ENCODE measurements at regions of chr15 and their contacts with region 1.

Region 1: DNA sequence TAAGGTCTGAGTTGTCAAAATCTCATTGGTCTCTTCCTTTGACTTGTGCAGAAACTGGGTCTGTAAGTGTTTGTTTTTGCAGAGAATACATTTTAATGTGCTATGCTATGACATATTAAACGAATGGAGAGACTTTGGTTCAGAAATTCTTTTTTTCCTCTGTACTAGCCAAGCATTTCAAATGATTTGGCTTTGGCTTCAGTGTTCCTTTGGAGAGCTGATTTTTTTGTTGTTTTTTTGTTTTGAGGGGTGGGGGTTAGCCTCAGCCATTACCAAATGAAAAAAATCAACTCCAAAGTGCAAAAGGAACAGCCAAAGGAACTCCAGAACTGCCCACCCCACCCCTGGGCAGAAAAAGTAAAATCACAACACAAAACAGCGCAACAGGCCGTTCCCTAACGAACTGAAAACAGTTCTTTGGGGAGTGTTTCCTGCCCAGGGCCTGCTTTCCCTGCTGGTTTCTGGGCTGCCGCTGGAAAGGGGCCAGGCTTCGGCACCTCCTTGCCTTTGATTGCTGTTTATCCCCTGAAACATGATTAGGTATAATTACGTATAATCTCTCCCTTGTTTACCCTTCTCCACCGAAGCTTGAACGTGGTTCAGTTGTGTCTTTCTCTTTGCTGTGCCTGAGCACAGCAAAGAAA is 57.6 kb upstream of the NEO1 start:
- DNase-seq: no peak
- ATAC-seq: no peak
- H3K4me3 ChIP-seq: no peak overlapping the region
- H3K27ac ChIP-seq: no peak overlapping the region
- H3K4me1 ChIP-seq: peaks cover 6% of the 10 kb centered on the region
- H3K27me3 ChIP-seq: no peaks in the 10 kb centered on the region
- CTCF ChIP-seq: no peak

Region 2: GRCh38 chr15:72671535-72671934 is 323.1 kb before region 1 on chr15:
- intact Hi-C with region 1: no loop called
- DNase-seq: no peak
- ATAC-seq: no peak
- H3K4me3 ChIP-seq: no peak overlapping the region
- H3K27ac ChIP-seq: no peak overlapping the region
- H3K4me1 ChIP-seq: peaks cover 4% of the 10 kb centered on the region
- H3K27me3 ChIP-seq: peaks cover 11% of the 10 kb centered on the region
- CTCF ChIP-seq: no peak

Region 3: DNA sequence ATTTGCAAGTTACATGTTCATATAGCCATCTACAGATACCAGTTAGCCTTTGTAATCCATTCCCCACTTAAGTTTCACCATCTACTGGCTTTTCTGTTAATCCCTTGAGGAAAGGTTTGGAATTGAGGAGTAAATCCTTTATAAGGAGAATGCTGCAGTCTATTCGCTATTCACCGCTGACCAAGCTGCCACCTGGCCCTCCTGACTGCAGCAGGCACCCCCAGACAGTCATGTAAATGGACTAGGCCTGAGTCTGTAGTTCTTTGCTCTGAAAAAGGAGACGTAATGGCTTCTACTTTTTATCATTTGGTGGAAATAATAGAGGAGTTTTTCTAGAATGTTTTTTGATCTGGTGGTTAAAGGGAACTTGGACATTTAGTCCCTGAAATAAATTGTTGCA is 311.9 kb before region 1 on chr15:
- intact Hi-C with region 1: no loop called
- DNase-seq: no peak
- ATAC-seq: no peak
- H3K4me3 ChIP-seq: no peak overlapping the region
- H3K27ac ChIP-seq: no peak overlapping the region
- H3K4me1 ChIP-seq: peaks cover 4% of the 10 kb centered on the region
- H3K27me3 ChIP-seq: no peaks in the 10 kb centered on the region
- CTCF ChIP-seq: no peak

Region 4: DNA sequence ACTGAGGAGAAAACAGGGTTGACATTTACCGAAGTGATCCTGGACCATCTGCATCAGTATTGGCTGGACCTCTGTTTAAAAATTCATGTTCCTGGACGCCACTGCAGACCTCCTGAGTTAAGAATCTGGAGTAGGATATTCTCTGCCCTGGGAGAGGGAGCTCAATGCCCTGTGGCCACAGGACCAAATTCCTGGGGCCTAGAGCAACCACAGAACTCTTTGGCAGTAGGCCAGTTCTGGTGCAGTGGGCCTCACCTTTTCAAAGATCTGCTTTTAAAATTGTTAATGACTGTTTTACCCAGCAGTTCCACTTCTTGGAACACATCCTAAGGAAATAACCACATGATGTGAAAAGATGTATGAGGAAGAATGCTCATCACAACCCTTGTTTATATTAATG is 77.8 kb before region 1 on chr15:
- intact Hi-C with region 1: no loop called
- DNase-seq: no peak
- ATAC-seq: no peak
- H3K4me3 ChIP-seq: no peak overlapping the region
- H3K27ac ChIP-seq: no peak overlapping the region
- H3K4me1 ChIP-seq: no peaks in the 10 kb centered on the region
- H3K27me3 ChIP-seq: no peaks in the 10 kb centered on the region
- CTCF ChIP-seq: no peak

Region 5: DNA sequence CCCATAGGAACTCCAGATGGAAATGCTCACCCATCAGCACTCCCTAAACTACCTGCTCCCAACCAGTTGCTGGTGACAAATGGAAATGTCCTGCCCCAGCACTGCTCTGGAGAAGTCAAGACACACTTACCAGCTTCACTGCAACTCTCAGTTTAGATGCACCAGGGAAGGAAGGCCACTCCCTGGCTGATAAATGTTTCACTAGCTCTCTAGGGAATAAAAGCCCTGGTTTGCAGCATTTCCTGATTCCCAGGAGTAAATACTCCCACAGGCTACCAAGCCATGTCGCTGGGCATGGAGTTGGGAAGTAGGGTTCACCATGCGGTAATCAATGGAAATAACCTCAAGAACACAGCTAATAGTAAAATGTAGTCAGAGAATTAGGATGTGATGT is 54.4 kb before region 1 on chr15:
- intact Hi-C with region 1: no loop called
- DNase-seq: no peak
- ATAC-seq: no peak
- H3K4me3 ChIP-seq: no peak overlapping the region
- H3K27ac ChIP-seq: no peak overlapping the region
- H3K4me1 ChIP-seq: no peaks in the 10 kb centered on the region
- H3K27me3 ChIP-seq: no peaks in the 10 kb centered on the region
- CTCF ChIP-seq: no peak

Region 6: DNA sequence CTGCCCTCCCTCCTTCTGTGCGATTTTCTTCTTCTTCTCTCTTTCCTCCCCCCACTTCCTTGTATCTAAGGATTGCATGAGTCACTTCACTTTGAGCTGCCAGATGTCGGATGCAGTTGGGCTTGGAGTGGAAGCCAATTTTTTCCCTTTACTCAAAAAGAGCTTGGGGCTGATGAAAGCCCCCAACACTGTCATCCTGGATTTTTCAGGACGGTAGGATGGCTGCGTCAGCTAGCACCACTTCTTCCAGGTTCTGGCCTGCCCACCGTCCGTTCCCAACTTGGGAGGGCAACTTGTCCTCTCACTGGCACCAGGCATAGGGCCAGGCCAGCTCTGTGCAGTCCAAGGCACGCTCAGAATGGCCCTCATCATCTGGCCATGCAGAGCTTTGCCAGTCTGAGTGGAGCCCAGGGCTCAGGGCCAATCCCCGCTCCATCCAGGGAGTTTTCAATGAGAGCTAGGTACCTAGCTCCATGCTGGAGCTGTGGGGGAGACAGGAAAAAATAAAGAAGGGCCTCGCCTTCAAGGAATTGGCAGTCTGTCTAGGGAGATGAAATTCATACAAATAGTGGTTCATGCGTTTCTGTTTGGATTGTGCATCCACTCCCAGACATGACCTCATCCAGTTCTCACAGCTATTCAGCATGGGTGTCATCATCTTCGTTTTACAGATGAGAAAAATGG is 806.1 kb after region 1 on chr15:
- intact Hi-C with region 1: loop called (anchors 10 kb)
- DNase-seq: no peak
- ATAC-seq: no peak
- H3K4me3 ChIP-seq: no peak overlapping the region
- H3K27ac ChIP-seq: no peak overlapping the region
- H3K4me1 ChIP-seq: peaks cover 11% of the 10 kb centered on the region
- H3K27me3 ChIP-seq: no peaks in the 10 kb centered on the region
- CTCF ChIP-seq: no peak

Measured in upper lobe of right lung (tissue), 1 donor.